Activated CD4-positive, alpha-beta T cell treated with anti-CD3 and anti-CD28 coated beads for 36 hours (primary cell): ENCODE measurements at regions of chr2 and their contacts with region 1.

Region 1: GRCh38 chr2:61937886-61938285 is 32.4 kb downstream of the COMMD1 start:
- DNase-seq: no peak
- ATAC-seq: no peak
- H3K4me3 Mint-ChIP-seq: no peak overlapping the region
- H3K27ac Mint-ChIP-seq: no peak overlapping the region
- H3K4me1 Mint-ChIP-seq: peaks cover 1% of the 10 kb centered on the region
- H3K27me3 Mint-ChIP-seq: no peaks in the 10 kb centered on the region

Region 2: GRCh38 chr2:61978522-61978921 is 40.6 kb after region 1 on chr2:
- CTCF ChIA-PET with region 1: no interaction called
- POLR2A ChIA-PET with region 1: no interaction called
- intact Hi-C with region 1: loop called in 1 of 2 experiments (anchors 1 kb)
- DNase-seq: no peak
- ATAC-seq: no peak
- H3K4me3 Mint-ChIP-seq: no peak overlapping the region
- H3K27ac Mint-ChIP-seq: no peak overlapping the region
- H3K4me1 Mint-ChIP-seq: peaks cover 5% of the 10 kb centered on the region
- H3K27me3 Mint-ChIP-seq: no peaks in the 10 kb centered on the region

Region 3: GRCh38 chr2:62452701-62453449 is 515.0 kb after region 1 on chr2:
- CTCF ChIA-PET with region 1: no interaction called
- POLR2A ChIA-PET with region 1: no interaction called
- intact Hi-C with region 1: no loop called
- DNase-seq: no peak
- ATAC-seq: no peak
- H3K4me3 Mint-ChIP-seq: no peak overlapping the region
- H3K27ac Mint-ChIP-seq: no peak overlapping the region
- H3K4me1 Mint-ChIP-seq: peaks cover 2% of the 10 kb centered on the region
- H3K27me3 Mint-ChIP-seq: peaks cover 4% of the 10 kb centered on the region